Naive thymus-derived CD4-positive, alpha-beta T cell (primary cell): ENCODE measurements at regions of chr12 and their contacts with region 1.

Region 1: GRCh38 chr12:56098592-56098991 is 5.8 kb upstream of the PA2G4 start:
- DNase-seq: no peak
- ATAC-seq: no peak
- H3K4me3 ChIP-seq: no peak overlapping the region
- H3K4me3 Mint-ChIP-seq: no peak overlapping the region
- H3K27ac ChIP-seq: no peak overlapping the region
- H3K27ac Mint-ChIP-seq: peak overlapping the region in 1 of 9 donors; percentile 16
- H3K4me1 ChIP-seq: peaks cover 21 to 23% of the 10 kb centered on the region in 2 donors
- H3K4me1 Mint-ChIP-seq: peaks cover 20 to 41% (median 38%) of the 10 kb centered on the region in 7 donors
- H3K27me3 ChIP-seq: no peaks in the 10 kb centered on the region
- H3K27me3 Mint-ChIP-seq: peaks cover 0 to 35% (median 0%) of the 10 kb centered on the region in 5 donors

Region 2: GRCh38 chr12:56084958-56085543 is 13.5 kb before region 1 on chr12:
- CTCF ChIA-PET with region 1: interaction called, 5 read pairs
- POLR2A ChIA-PET with region 1: interaction called, 85 read pairs
- intact Hi-C with region 1: loop called in 1 of 2 experiments (anchors 1 kb)
- DNase-seq: no peak
- ATAC-seq: peak; percentile 42
- H3K4me3 ChIP-seq: no peak overlapping the region
- H3K4me3 Mint-ChIP-seq: no peak overlapping the region
- H3K27ac ChIP-seq: no peak overlapping the region
- H3K27ac Mint-ChIP-seq: no peak overlapping the region
- H3K4me1 ChIP-seq: peaks cover 0 to 10% of the 10 kb centered on the region in 2 donors
- H3K4me1 Mint-ChIP-seq: peaks cover 0 to 23% (median 7%) of the 10 kb centered on the region in 7 donors
- H3K27me3 ChIP-seq: no peaks in the 10 kb centered on the region
- H3K27me3 Mint-ChIP-seq: peaks cover 0 to 42% (median 8%) of the 10 kb centered on the region in 5 donors

Region 3: DNA sequence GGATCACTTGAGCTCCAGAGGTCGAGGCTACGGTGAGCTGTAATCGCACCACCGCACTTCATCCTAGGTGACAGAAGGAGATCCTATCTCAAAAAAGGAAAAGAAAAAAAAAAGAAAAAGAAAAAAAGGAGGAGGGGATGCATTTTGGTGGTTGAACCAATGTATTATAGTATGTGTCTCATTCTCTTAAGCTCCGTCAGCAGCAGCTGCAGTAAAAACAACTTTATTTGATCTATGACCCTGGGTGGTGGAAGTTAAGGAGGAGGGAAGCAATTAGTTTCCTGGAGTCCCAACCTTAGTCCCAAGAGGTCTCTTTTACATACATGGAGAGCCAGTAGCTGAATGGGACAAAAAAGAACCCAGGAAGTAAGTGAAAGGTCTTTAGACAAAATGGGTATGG is 290.8 kb after region 1 on chr12:
- CTCF ChIA-PET with region 1: no interaction called
- POLR2A ChIA-PET with region 1: no interaction called
- intact Hi-C with region 1: no loop called
- DNase-seq: no peak
- ATAC-seq: no peak
- H3K4me3 ChIP-seq: no peak overlapping the region
- H3K4me3 Mint-ChIP-seq: no peak overlapping the region
- H3K27ac ChIP-seq: no peak overlapping the region
- H3K27ac Mint-ChIP-seq: peak overlapping the region in 1 of 9 donors; percentile 72
- H3K4me1 ChIP-seq: no peaks in the 10 kb centered on the region
- H3K4me1 Mint-ChIP-seq: peaks cover 0 to 3% (median 0%) of the 10 kb centered on the region in 7 donors
- H3K27me3 ChIP-seq: no peaks in the 10 kb centered on the region
- H3K27me3 Mint-ChIP-seq: peaks cover 0 to 5% (median 0%) of the 10 kb centered on the region in 5 donors

Region 4: GRCh38 chr12:57852620-57853500 is 1754.3 kb after region 1 on chr12:
- CTCF ChIA-PET with region 1: no interaction called
- POLR2A ChIA-PET with region 1: no interaction called
- intact Hi-C with region 1: no loop called
- DNase-seq: no peak
- ATAC-seq: peak; percentile 5
- H3K4me3 ChIP-seq: no peak overlapping the region
- H3K4me3 Mint-ChIP-seq: peak overlapping the region in 6 of 10 donors; percentile 42 to 70 (median 49)
- H3K27ac ChIP-seq: no peak overlapping the region
- H3K27ac Mint-ChIP-seq: no peak overlapping the region
- H3K4me1 ChIP-seq: peaks cover 0 to 8% of the 10 kb centered on the region in 2 donors
- H3K4me1 Mint-ChIP-seq: peaks cover 20 to 30% (median 25%) of the 10 kb centered on the region in 7 donors
- H3K27me3 ChIP-seq: no peaks in the 10 kb centered on the region
- H3K27me3 Mint-ChIP-seq: peaks cover 0 to 83% (median 16%) of the 10 kb centered on the region in 5 donors